ENCODE measurements at regions of chr2 and their contacts with region 1.

Region 1: DNA sequence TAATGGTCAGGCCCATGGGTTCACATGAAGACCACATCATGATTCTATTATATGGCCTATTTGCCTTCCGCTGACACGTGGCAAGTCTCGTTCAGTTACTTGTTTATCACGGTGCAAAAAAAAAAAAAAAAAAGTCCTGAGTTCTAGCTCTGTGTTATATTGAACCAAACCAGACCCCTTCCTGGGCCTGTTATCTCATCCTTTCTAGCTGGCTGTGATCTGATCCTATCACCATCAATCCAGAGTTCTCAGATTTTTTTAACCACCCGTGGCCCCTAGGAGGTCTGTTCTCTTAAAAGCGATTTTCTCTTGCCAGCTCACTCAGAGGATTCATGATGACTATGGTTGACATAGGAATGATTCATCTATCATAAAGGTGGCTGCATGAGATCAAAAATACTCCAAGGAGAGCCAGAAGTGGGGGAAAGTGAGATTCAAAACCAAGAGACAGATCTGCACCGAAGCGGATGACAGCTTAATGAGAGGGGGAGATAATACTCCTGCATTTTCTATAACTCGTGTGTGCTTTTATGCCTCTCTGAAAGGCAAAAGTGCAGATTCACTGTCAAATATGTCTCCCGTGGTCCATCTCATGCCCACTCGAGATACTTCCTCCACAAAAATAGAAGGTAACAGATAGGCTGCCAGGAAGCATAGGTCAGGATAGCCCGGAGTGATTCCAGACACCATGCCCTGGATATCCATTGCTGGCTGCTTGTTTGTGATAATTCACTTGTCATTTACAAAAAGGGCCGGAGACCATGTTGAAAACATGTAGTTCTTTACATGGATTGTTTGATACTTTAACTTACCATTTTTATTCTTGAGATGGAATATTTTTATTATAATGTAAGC is 505.7 kb upstream of the KLHL29 start:
- DNase-seq: peak; percentile 51
- ATAC-seq: no peak
- H3K4me3 ChIP-seq: no peak overlapping the region
- H3K27ac ChIP-seq: peak overlapping the region; percentile 23; the same call in 1 of the 2 replicates
- H3K4me1 ChIP-seq: no peaks in the 10 kb centered on the region; the same call in 1 of the 2 replicates
- H3K27me3 ChIP-seq: no peaks in the 10 kb centered on the region
- CTCF ChIP-seq: no peak

Region 2: GRCh38 chr2:22560021-22560420 is 319.2 kb before region 1 on chr2:
- CTCF ChIA-PET with region 1: no interaction called
- POLR2A ChIA-PET with region 1: no interaction called
- intact Hi-C with region 1: loop called (anchors 5 kb)
- DNase-seq: no peak
- ATAC-seq: no peak
- H3K4me3 ChIP-seq: no peak overlapping the region
- H3K27ac ChIP-seq: no peak overlapping the region
- H3K4me1 ChIP-seq: no peaks in the 10 kb centered on the region
- H3K27me3 ChIP-seq: no peaks in the 10 kb centered on the region
- CTCF ChIP-seq: no peak

Region 3: DNA sequence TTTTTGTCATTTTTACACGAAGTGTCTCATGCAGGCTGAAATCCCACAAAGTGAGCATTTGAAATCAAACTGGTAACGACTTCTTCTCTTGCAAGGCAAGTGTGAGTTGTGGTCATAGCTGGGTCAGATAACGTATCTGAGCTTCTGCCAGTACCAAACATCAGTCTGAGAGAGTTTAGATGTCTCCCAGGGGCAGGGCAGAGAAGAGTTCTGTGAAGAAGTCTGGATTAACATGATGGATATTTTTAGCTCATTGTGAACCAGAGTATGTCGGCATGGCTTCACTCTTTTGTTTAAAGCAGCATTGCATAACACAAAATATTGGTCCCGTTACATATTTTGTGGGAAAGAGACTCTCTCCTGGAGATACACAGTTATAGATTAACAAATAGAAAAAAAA is 149.8 kb before region 1 on chr2:
- CTCF ChIA-PET with region 1: no interaction called
- POLR2A ChIA-PET with region 1: no interaction called
- intact Hi-C with region 1: no loop called
- DNase-seq: no peak
- ATAC-seq: no peak
- H3K4me3 ChIP-seq: no peak overlapping the region
- H3K27ac ChIP-seq: no peak overlapping the region
- H3K4me1 ChIP-seq: no peaks in the 10 kb centered on the region
- H3K27me3 ChIP-seq: 0 out of 2 replicates have a peak, but pooled peaks cover 3% of the 10 kb centered on the region
- CTCF ChIP-seq: no peak